ENCODE measurements at regions of chr9 and their contacts with region 1.

Region 1: DNA sequence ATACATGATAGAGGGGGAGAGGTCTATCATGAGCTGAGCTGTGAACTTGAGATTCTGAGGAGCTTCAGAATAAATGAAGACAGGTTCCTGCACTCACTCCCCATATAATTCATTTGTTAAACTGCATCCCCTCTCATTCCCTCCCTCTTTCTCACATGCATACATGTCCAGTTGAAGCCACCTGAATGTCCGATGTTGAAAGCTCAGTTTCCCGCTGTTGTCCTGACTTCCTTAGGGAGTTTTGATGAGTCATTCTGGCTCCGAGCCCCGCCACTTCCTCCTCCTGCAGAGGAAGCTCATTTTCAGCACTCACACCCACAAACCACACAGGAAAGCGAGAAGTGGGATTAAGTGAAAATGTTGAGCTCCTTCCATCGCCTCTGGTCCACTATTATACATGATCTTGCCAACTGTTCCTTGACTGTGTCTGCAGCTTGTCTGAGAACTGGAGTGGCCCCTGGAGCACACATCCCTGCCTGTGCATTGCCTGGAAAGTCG is 121.2 kb downstream of the CEMIP2 start:
- DNase-seq: no peak
- H3K4me3 ChIP-seq: peak overlapping the region in 1 of 2 donors; percentile 4
- H3K4me3 Mint-ChIP-seq: peak overlapping the region; percentile 59 to 88 (median 78)
- H3K27ac ChIP-seq: no peak overlapping the region
- H3K27ac Mint-ChIP-seq: peak overlapping the region in 4 of 7 donors; percentile 7 to 58 (median 17)
- H3K4me1 ChIP-seq: peaks cover 21% of the 10 kb centered on the region
- H3K4me1 Mint-ChIP-seq: peaks cover 21 to 45% (median 30%) of the 10 kb centered on the region in 4 donors
- H3K27me3 ChIP-seq: no peaks in the 10 kb centered on the region
- H3K27me3 Mint-ChIP-seq: no peaks in the 10 kb centered on the region

Region 2: GRCh38 chr9:71628247-71628646 is 18.9 kb before region 1 on chr9:
- CTCF ChIA-PET with region 1: interaction called, 12 read pairs
- POLR2A ChIA-PET with region 1: no interaction called
- intact Hi-C with region 1: no loop called
- DNase-seq: peak in 4 of 5 donors; percentile 22 to 34 (median 25)
- H3K4me3 ChIP-seq: no peak overlapping the region
- H3K4me3 Mint-ChIP-seq: no peak overlapping the region
- H3K27ac ChIP-seq: no peak overlapping the region
- H3K27ac Mint-ChIP-seq: no peak overlapping the region
- H3K4me1 ChIP-seq: no peaks in the 10 kb centered on the region
- H3K4me1 Mint-ChIP-seq: peaks cover 0 to 2% (median 0%) of the 10 kb centered on the region in 4 donors
- H3K27me3 ChIP-seq: no peaks in the 10 kb centered on the region
- H3K27me3 Mint-ChIP-seq: no peaks in the 10 kb centered on the region

Region 3: DNA sequence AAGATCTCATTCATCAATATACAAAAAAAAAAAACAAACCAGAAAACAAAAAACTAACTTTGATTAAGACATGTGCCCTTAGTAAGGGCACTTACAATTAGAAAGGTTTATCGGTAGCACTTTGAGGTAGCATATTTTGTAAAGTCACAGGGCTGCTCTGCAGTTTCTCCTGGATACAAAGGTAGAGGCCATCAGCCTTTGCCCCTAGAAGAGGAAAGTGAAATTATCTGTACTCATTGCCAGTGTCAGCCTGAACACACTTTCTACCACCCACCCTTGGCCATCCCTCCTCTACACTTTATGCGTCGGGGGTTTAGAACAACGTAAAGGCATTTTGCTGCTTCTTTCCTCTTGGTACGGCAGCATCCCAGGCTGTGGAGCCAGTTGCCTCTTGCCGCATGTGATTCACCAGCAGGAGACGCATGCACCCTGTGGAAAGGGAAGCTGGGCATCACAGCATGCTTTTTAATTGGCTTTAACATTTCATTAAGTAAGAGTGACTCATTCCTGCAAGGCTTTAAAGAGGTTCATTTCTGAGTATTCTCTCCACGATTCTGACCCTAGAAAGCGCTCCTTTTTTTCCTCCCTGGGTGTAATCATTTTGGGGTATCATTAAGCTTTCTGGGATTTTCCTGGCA is 36.6 kb after region 1 on chr9:
- CTCF ChIA-PET with region 1: interaction called, 8 read pairs
- POLR2A ChIA-PET with region 1: interaction called, 11 read pairs
- intact Hi-C with region 1: no loop called
- DNase-seq: no peak
- H3K4me3 ChIP-seq: no peak overlapping the region
- H3K4me3 Mint-ChIP-seq: peak overlapping the region; percentile 31 to 79 (median 69)
- H3K27ac ChIP-seq: no peak overlapping the region
- H3K27ac Mint-ChIP-seq: peak overlapping the region; percentile 8 to 90 (median 72)
- H3K4me1 ChIP-seq: peaks cover 37% of the 10 kb centered on the region
- H3K4me1 Mint-ChIP-seq: peaks cover 36 to 59% (median 48%) of the 10 kb centered on the region in 4 donors
- H3K27me3 ChIP-seq: no peaks in the 10 kb centered on the region
- H3K27me3 Mint-ChIP-seq: no peaks in the 10 kb centered on the region